ENCODE measurements at regions of chr20 and their contacts with region 1.

Region 1: DNA sequence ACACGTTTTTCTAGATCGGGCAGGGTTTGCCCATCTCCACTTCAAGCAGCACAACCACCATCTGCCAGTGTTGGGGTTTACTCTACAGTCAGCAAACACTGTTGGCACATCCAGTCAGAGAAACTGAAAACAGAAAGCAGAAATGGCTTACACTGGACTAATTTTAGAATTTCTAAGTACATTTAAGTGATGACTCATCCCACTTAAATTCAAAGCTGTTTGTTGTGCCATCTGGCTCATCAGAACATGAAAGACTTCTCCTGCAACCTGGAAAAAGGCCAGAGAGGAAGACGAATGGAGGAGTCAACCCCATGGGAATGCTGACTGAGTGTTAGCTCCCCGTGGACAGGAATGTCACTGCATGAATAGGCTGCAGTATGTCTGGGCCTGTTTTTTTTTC is 21.8 kb downstream of the FAM209B start:
- DNase-seq: peak in 1 of 9 experiments; percentile 3
- ATAC-seq: no peak
- H3K4me3 ChIP-seq: no peak overlapping the region
- H3K4me3 Mint-ChIP-seq: no peak overlapping the region
- H3K27ac ChIP-seq: no peak overlapping the region
- H3K27ac Mint-ChIP-seq: no peak overlapping the region
- H3K4me1 ChIP-seq: no peaks in the 10 kb centered on the region
- H3K4me1 Mint-ChIP-seq: no peaks in the 10 kb centered on the region
- H3K27me3 ChIP-seq: no peaks in the 10 kb centered on the region
- H3K27me3 Mint-ChIP-seq: peaks cover 2% of the 10 kb centered on the region
- CTCF ChIP-seq: no peak

Region 2: DNA sequence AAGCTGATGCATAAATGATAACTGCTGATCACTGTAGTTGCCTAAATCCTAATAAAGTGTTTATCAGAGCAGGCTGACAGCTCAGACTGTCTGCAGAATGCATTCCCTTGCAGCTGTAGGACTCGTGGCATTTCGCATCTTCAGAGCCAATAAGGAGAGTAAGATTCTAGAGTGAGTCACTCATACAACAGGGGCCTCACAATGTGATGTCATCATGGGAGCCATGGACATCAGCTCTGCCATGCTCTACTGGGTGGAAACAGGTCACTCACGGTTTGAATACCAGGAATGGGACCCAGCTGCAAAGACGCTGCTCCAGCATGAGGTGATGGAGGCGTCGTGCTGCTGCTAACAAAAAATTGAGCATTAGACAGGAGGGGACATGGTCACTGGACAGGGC is 14.4 kb before region 1 on chr20:
- CTCF ChIA-PET with region 1: interaction called, 10 read pairs
- POLR2A ChIA-PET with region 1: no interaction called
- intact Hi-C with region 1: no loop called
- DNase-seq: no peak
- ATAC-seq: no peak
- H3K4me3 ChIP-seq: no peak overlapping the region
- H3K4me3 Mint-ChIP-seq: no peak overlapping the region
- H3K27ac ChIP-seq: no peak overlapping the region
- H3K27ac Mint-ChIP-seq: no peak overlapping the region
- H3K4me1 ChIP-seq: no peaks in the 10 kb centered on the region
- H3K4me1 Mint-ChIP-seq: no peaks in the 10 kb centered on the region
- H3K27me3 ChIP-seq: no peaks in the 10 kb centered on the region
- H3K27me3 Mint-ChIP-seq: no peaks in the 10 kb centered on the region
- CTCF ChIP-seq: no peak

Region 3: DNA sequence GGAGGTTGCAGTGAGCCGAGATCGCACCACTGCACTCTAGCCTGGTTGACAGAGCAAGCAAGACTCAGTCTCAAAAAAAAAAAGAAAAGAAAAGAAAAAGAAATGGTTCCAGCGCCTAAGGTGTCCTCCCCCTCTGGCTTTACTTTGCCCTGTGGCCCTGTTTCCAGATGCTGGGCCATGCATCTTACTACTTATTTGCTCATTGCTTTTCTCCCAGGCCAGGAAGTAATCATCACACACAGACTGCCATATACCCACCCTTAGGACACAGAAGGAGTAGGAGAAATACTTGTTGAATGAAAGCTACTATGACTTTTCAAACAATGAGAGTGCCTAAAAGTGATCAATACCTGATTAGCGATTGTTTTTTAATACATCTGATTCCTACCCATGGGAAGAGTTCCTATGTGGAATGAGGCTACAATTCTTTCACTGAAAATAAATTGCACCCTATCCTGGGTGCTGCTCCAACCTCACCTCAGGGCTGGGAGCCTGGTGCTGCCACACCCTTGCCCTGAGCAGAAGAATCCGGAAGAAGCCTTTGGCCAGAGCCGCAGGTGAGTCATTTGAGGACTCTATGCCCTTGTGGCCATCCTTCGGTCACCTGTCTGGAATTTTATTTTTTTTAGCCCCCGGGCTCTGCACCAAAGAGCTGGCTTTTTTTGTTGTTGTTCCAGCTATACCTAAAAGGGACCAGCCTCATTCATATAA is 51.5 kb after region 1 on chr20:
- CTCF ChIA-PET with region 1: no interaction called
- POLR2A ChIA-PET with region 1: no interaction called
- intact Hi-C with region 1: no loop called
- DNase-seq: no peak
- ATAC-seq: no peak
- H3K4me3 ChIP-seq: no peak overlapping the region
- H3K4me3 Mint-ChIP-seq: no peak overlapping the region
- H3K27ac ChIP-seq: no peak overlapping the region
- H3K27ac Mint-ChIP-seq: no peak overlapping the region
- H3K4me1 ChIP-seq: no peaks in the 10 kb centered on the region
- H3K4me1 Mint-ChIP-seq: no peaks in the 10 kb centered on the region
- H3K27me3 ChIP-seq: no peaks in the 10 kb centered on the region
- H3K27me3 Mint-ChIP-seq: peaks cover 2% of the 10 kb centered on the region
- CTCF ChIP-seq: no peak

Region 4: GRCh38 chr20:56974499-56975236 is 419.8 kb after region 1 on chr20:
- CTCF ChIA-PET with region 1: interaction called, 3 read pairs
- POLR2A ChIA-PET with region 1: no interaction called
- intact Hi-C with region 1: loop called in 1 of 2 experiments (anchors 5 kb)
- DNase-seq: no peak
- ATAC-seq: no peak
- H3K4me3 ChIP-seq: no peak overlapping the region
- H3K4me3 Mint-ChIP-seq: no peak overlapping the region
- H3K27ac ChIP-seq: no peak overlapping the region
- H3K27ac Mint-ChIP-seq: no peak overlapping the region
- H3K4me1 ChIP-seq: no peaks in the 10 kb centered on the region
- H3K4me1 Mint-ChIP-seq: no peaks in the 10 kb centered on the region
- H3K27me3 ChIP-seq: no peaks in the 10 kb centered on the region
- H3K27me3 Mint-ChIP-seq: peaks cover 47% of the 10 kb centered on the region
- CTCF ChIP-seq: no peak

Region 5: GRCh38 chr20:57108732-57109573 is 554.1 kb after region 1 on chr20:
- CTCF ChIA-PET with region 1: no interaction called
- POLR2A ChIA-PET with region 1: no interaction called
- intact Hi-C with region 1: no loop called
- DNase-seq: no peak
- ATAC-seq: no peak
- H3K4me3 ChIP-seq: no peak overlapping the region
- H3K4me3 Mint-ChIP-seq: no peak overlapping the region
- H3K27ac ChIP-seq: no peak overlapping the region
- H3K27ac Mint-ChIP-seq: no peak overlapping the region
- H3K4me1 ChIP-seq: no peaks in the 10 kb centered on the region
- H3K4me1 Mint-ChIP-seq: no peaks in the 10 kb centered on the region
- H3K27me3 ChIP-seq: no peaks in the 10 kb centered on the region
- H3K27me3 Mint-ChIP-seq: peaks cover 12% of the 10 kb centered on the region
- CTCF ChIP-seq: no peak

Region 6: GRCh38 chr20:58402827-58403226 is 1848.0 kb after region 1 on chr20:
- CTCF ChIA-PET with region 1: no interaction called
- POLR2A ChIA-PET with region 1: no interaction called
- intact Hi-C with region 1: loop called in 1 of 2 experiments (anchors 5 kb)
- DNase-seq: no peak
- ATAC-seq: no peak
- H3K4me3 ChIP-seq: no peak overlapping the region
- H3K4me3 Mint-ChIP-seq: no peak overlapping the region
- H3K27ac ChIP-seq: no peak overlapping the region
- H3K27ac Mint-ChIP-seq: no peak overlapping the region
- H3K4me1 ChIP-seq: peaks cover 48% of the 10 kb centered on the region
- H3K4me1 Mint-ChIP-seq: peaks cover 41% of the 10 kb centered on the region
- H3K27me3 ChIP-seq: no peaks in the 10 kb centered on the region
- H3K27me3 Mint-ChIP-seq: no peaks in the 10 kb centered on the region
- CTCF ChIP-seq: no peak